ENCODE measurements at regions of chr1 and their contacts with region 1.

Region 1: GRCh38 chr1:244302889-244303613 is 148.7 kb downstream of the ADSS2 start:
- DNase-seq: no peak
- ATAC-seq: no peak
- H3K4me3 ChIP-seq: no peak overlapping the region
- H3K4me3 Mint-ChIP-seq: no peak overlapping the region
- H3K27ac ChIP-seq: no peak overlapping the region
- H3K27ac Mint-ChIP-seq: no peak overlapping the region
- H3K4me1 ChIP-seq: peaks cover 4 to 17% of the 10 kb centered on the region in 2 donors
- H3K4me1 Mint-ChIP-seq: peaks cover 10% of the 10 kb centered on the region
- H3K27me3 ChIP-seq: no peaks in the 10 kb centered on the region
- H3K27me3 Mint-ChIP-seq: no peaks in the 10 kb centered on the region
- CTCF ChIP-seq: no peak

Region 2: GRCh38 chr1:243956450-243956849 is 346.6 kb before region 1 on chr1:
- CTCF ChIA-PET with region 1: no interaction called
- POLR2A ChIA-PET with region 1: no interaction called
- intact Hi-C with region 1: no loop called
- DNase-seq: no peak
- ATAC-seq: no peak
- H3K4me3 ChIP-seq: no peak overlapping the region
- H3K4me3 Mint-ChIP-seq: no peak overlapping the region
- H3K27ac ChIP-seq: no peak overlapping the region
- H3K27ac Mint-ChIP-seq: no peak overlapping the region
- H3K4me1 ChIP-seq: no peaks in the 10 kb centered on the region
- H3K4me1 Mint-ChIP-seq: no peaks in the 10 kb centered on the region
- H3K27me3 ChIP-seq: peaks cover 0 to 6% (median 2%) of the 10 kb centered on the region in 4 experiments
- H3K27me3 Mint-ChIP-seq: peaks cover 35% of the 10 kb centered on the region
- CTCF ChIP-seq: no peak

Region 3: GRCh38 chr1:244041471-244042110 is 261.5 kb before region 1 on chr1:
- CTCF ChIA-PET with region 1: no interaction called
- POLR2A ChIA-PET with region 1: no interaction called
- intact Hi-C with region 1: no loop called
- DNase-seq: no peak
- ATAC-seq: no peak
- H3K4me3 ChIP-seq: no peak overlapping the region
- H3K4me3 Mint-ChIP-seq: no peak overlapping the region
- H3K27ac ChIP-seq: no peak overlapping the region
- H3K27ac Mint-ChIP-seq: no peak overlapping the region
- H3K4me1 ChIP-seq: peaks cover under 1 to 7% of the 10 kb centered on the region in 2 donors
- H3K4me1 Mint-ChIP-seq: peaks cover 10% of the 10 kb centered on the region
- H3K27me3 ChIP-seq: no peaks in the 10 kb centered on the region
- H3K27me3 Mint-ChIP-seq: no peaks in the 10 kb centered on the region
- CTCF ChIP-seq: no peak

Region 4: DNA sequence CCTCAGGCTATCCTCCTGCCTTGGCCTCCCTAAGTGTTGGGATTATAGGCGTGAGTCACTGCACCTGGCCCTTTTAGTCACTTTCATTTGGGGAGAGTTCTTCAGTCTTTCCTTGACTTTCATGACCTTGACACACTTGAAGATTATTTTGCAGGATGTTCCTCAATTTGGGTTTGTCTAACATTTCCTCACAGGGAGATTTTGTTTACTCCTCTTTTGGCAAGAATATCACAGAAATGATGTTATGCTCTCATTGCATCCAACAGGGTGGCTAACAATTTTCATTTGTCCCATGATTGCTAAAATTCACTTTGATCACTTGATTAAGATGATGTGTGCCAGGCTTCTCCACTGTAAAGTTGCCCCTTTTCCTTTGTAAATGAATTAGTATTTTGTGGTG is 15.3 kb before region 1 on chr1:
- CTCF ChIA-PET with region 1: interaction called, 12 read pairs
- POLR2A ChIA-PET with region 1: no interaction called
- intact Hi-C with region 1: no loop called
- DNase-seq: no peak
- ATAC-seq: no peak
- H3K4me3 ChIP-seq: no peak overlapping the region
- H3K4me3 Mint-ChIP-seq: no peak overlapping the region
- H3K27ac ChIP-seq: no peak overlapping the region
- H3K27ac Mint-ChIP-seq: no peak overlapping the region
- H3K4me1 ChIP-seq: no peaks in the 10 kb centered on the region
- H3K4me1 Mint-ChIP-seq: no peaks in the 10 kb centered on the region
- H3K27me3 ChIP-seq: no peaks in the 10 kb centered on the region
- H3K27me3 Mint-ChIP-seq: peaks cover 3% of the 10 kb centered on the region
- CTCF ChIP-seq: no peak

Measured in B cell (primary cell).